Right cardiac atrium (tissue), 5 donors: ENCODE measurements at regions of chr11 and their contacts with region 1.

Region 1: GRCh38 chr11:14300661-14301304 is 58.2 kb downstream of the RRAS2 start:
- DNase-seq: peak in 2 of 3 donors; percentile 48 to 72
- ATAC-seq: peak; percentile 93 to 94
- H3K4me3 ChIP-seq: no peak overlapping the region
- H3K27ac ChIP-seq: no peak overlapping the region
- H3K4me1 ChIP-seq: no peaks in the 10 kb centered on the region
- H3K27me3 ChIP-seq: no peaks in the 10 kb centered on the region

Region 2: GRCh38 chr11:14358729-14359439 is 58.1 kb after region 1 on chr11 and contains the start of gene RRAS2:
- intact Hi-C with region 1: loop called in 1 of 4 experiments (anchors 5 kb)
- DNase-seq: peak; percentile 81 to 93 (median 92)
- ATAC-seq: peak; percentile 92 to 93
- H3K4me3 ChIP-seq: peak within 1 kb of the TSS; percentile 97
- H3K27ac ChIP-seq: peak within 1 kb of the TSS; percentile 89
- H3K4me1 ChIP-seq: no peaks in the 10 kb centered on the region
- H3K27me3 ChIP-seq: no peaks in the 10 kb centered on the region
- total RNA-seq, gene RRAS2: 23.9 to 32.7 (median 29.8) TPM

Region 3: GRCh38 chr11:14454861-14455632 is 154.3 kb after region 1 on chr11:
- intact Hi-C with region 1: loop called (anchors 2 to 5 kb)
- DNase-seq: no peak
- ATAC-seq: peak; percentile 43 to 47
- H3K4me3 ChIP-seq: no peak overlapping the region
- H3K27ac ChIP-seq: no peak overlapping the region
- H3K4me1 ChIP-seq: no peaks in the 10 kb centered on the region
- H3K27me3 ChIP-seq: no peaks in the 10 kb centered on the region